ENCODE measurements at regions of chr12 and their contacts with region 1.

Region 1: DNA sequence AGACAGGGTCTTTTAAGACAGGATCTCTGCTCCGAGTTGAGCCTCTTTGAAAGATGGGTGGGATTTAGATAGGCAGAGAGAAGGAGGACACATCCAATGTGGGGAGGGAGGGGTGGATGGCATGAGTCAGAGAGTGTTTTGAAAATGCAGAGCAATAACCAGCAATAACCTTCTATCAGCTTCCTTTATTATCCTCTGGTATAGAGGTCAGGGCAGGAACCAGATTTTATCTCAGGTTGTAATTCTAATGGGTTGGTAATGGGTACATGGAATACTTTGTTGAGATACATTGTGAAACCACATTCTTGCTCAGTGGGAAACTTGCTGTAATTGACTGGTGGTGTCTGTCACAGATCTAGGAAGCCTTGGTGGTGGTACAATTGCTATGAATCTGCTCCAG is 37.6 kb upstream of the CCDC63 start:
- DNase-seq: no peak
- H3K4me3 ChIP-seq: no peak overlapping the region
- H3K4me3 Mint-ChIP-seq: no peak overlapping the region
- H3K27ac ChIP-seq: no peak overlapping the region
- H3K27ac Mint-ChIP-seq: no peak overlapping the region
- H3K4me1 ChIP-seq: no peaks in the 10 kb centered on the region
- H3K4me1 Mint-ChIP-seq: no peaks in the 10 kb centered on the region
- H3K27me3 ChIP-seq: no peaks in the 10 kb centered on the region
- H3K27me3 Mint-ChIP-seq: peaks cover 4 to 13% of the 10 kb centered on the region in 2 donors

Region 2: GRCh38 chr12:110369992-110370391 is 439.2 kb before region 1 on chr12:
- CTCF ChIA-PET with region 1: no interaction called
- POLR2A ChIA-PET with region 1: interaction called, 10 read pairs
- DNase-seq: no peak
- H3K4me3 ChIP-seq: no peak overlapping the region
- H3K4me3 Mint-ChIP-seq: no peak overlapping the region
- H3K27ac ChIP-seq: no peak overlapping the region
- H3K27ac Mint-ChIP-seq: peak overlapping the region in 2 of 8 donors; percentile 55 to 73
- H3K4me1 ChIP-seq: no peaks in the 10 kb centered on the region
- H3K4me1 Mint-ChIP-seq: peaks cover 0 to 9% (median 8%) of the 10 kb centered on the region in 3 donors
- H3K27me3 ChIP-seq: no peaks in the 10 kb centered on the region
- H3K27me3 Mint-ChIP-seq: no peaks in the 10 kb centered on the region

Region 3: GRCh38 chr12:110718222-110718908 is 90.8 kb before region 1 on chr12:
- CTCF ChIA-PET with region 1: no interaction called
- POLR2A ChIA-PET with region 1: no interaction called
- DNase-seq: no peak
- H3K4me3 ChIP-seq: no peak overlapping the region
- H3K4me3 Mint-ChIP-seq: no peak overlapping the region
- H3K27ac ChIP-seq: no peak overlapping the region
- H3K27ac Mint-ChIP-seq: peak overlapping the region in 5 of 8 donors; percentile 8 to 85 (median 43)
- H3K4me1 ChIP-seq: no peaks in the 10 kb centered on the region
- H3K4me1 Mint-ChIP-seq: peaks cover 0 to 9% (median 1%) of the 10 kb centered on the region in 3 donors
- H3K27me3 ChIP-seq: no peaks in the 10 kb centered on the region
- H3K27me3 Mint-ChIP-seq: no peaks in the 10 kb centered on the region

Region 4: GRCh38 chr12:110872097-110872496 is 62.9 kb after region 1 on chr12:
- CTCF ChIA-PET with region 1: no interaction called
- POLR2A ChIA-PET with region 1: interaction called, 12 read pairs
- DNase-seq: no peak
- H3K4me3 ChIP-seq: no peak overlapping the region
- H3K4me3 Mint-ChIP-seq: no peak overlapping the region
- H3K27ac ChIP-seq: no peak overlapping the region
- H3K27ac Mint-ChIP-seq: no peak overlapping the region
- H3K4me1 ChIP-seq: no peaks in the 10 kb centered on the region
- H3K4me1 Mint-ChIP-seq: no peaks in the 10 kb centered on the region
- H3K27me3 ChIP-seq: no peaks in the 10 kb centered on the region
- H3K27me3 Mint-ChIP-seq: peaks cover 9 to 22% of the 10 kb centered on the region in 2 donors